PC-9 (cell line): ENCODE measurements at regions of chr4 and their contacts with region 1.

Region 1: DNA sequence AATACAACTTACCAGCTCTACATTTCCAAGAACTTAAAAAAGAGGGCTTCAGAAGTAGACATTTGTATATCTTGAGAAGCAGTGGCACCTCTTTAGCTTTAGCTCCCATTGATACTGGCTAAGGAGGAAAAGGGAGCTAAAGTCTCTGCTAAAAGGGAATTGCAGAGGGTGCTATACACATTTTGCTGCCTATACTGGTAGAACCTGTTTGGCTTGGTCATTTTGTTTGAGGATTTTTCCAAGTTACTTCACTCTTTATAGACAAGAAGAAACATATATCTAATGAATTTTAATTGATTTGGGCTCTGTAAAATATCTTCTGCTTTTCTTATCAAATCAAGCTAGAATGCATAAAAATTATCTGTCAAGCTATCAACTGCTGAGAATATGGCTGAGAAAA is 11.8 kb downstream of the PAPSS1 start:
- DNase-seq: peak in 1 of 2 experiments; percentile 36
- H3K4me3 ChIP-seq: no peak overlapping the region
- H3K27ac ChIP-seq: no peak overlapping the region
- H3K4me1 ChIP-seq: peaks cover 10% of the 10 kb centered on the region
- H3K27me3 ChIP-seq: no peaks in the 10 kb centered on the region
- CTCF ChIP-seq: no peak

Region 2: GRCh38 chr4:106695501-106696262 is 1012.5 kb before region 1 on chr4:
- CTCF ChIA-PET with region 1: no interaction called
- POLR2A ChIA-PET with region 1: no interaction called
- intact Hi-C with region 1: no loop called
- DNase-seq: no peak
- H3K4me3 ChIP-seq: no peak overlapping the region
- H3K27ac ChIP-seq: no peak overlapping the region
- H3K4me1 ChIP-seq: no peaks in the 10 kb centered on the region
- H3K27me3 ChIP-seq: no peaks in the 10 kb centered on the region
- CTCF ChIP-seq: no peak

Region 3: GRCh38 chr4:107247738-107248137 is 460.5 kb before region 1 on chr4:
- CTCF ChIA-PET with region 1: no interaction called
- POLR2A ChIA-PET with region 1: interaction called, 14 read pairs
- intact Hi-C with region 1: no loop called
- DNase-seq: no peak
- H3K4me3 ChIP-seq: no peak overlapping the region
- H3K27ac ChIP-seq: no peak overlapping the region
- H3K4me1 ChIP-seq: no peaks in the 10 kb centered on the region
- H3K27me3 ChIP-seq: no peaks in the 10 kb centered on the region
- CTCF ChIP-seq: no peak

Region 4: DNA sequence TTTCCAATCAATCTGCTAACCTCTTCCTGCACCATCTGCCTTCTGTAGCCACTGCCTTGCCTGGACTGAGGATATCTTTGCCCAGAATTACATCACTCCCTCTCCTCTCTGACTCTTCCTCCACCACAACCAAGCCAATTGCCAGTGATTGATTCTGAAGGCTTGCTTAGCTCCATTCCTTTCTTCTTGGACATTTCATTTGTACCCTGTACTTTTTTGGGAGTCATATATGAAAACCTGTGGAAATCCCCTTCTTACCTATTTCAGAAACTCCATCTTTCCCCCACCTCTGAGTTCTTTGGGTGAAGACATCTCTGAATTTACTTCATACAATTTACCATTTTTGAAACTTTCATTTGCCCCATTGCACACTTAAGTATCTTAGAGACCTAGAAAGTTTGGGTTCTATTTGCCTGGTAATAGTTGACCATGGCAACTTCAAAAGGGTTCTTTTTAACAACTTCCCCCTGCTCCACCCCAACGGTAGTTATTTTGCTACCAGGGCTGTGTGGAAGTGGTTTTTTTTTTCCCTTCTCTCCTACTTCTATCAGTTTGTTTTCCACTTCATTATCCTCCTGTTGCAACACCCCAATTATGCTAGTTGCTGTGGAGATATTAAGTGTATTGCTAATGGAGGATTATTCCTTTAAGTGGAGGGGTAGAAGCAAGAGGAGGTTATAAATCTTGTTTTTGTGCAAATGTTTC is 130.8 kb after region 1 on chr4:
- CTCF ChIA-PET with region 1: no interaction called
- POLR2A ChIA-PET with region 1: no interaction called
- intact Hi-C with region 1: no loop called
- DNase-seq: no peak
- H3K4me3 ChIP-seq: no peak overlapping the region
- H3K27ac ChIP-seq: peak overlapping the region; percentile 25; the same call in 1 of the 2 replicates
- H3K4me1 ChIP-seq: peaks cover 11% of the 10 kb centered on the region; the same call in 1 of the 2 replicates
- H3K27me3 ChIP-seq: no peaks in the 10 kb centered on the region
- CTCF ChIP-seq: no peak